GM12878 (cell line): ENCODE measurements at regions of chr18 and their contacts with region 1.

Region 1: GRCh38 chr18:34297287-34297686 is 72.6 kb upstream of the NOL4 start:
- DNase-seq: no peak
- ATAC-seq: peak; percentile 18; the same call in 1 of the 3 replicates
- H3K4me3 ChIP-seq: no peak overlapping the region
- H3K27ac ChIP-seq: no peak overlapping the region
- H3K4me1 ChIP-seq: no peaks in the 10 kb centered on the region
- H3K27me3 ChIP-seq: no peaks in the 10 kb centered on the region
- CTCF ChIP-seq: no peak
- EP300 ChIP-seq: no peak
- POLR2A ChIP-seq: no peak
- RAD21 ChIP-seq: no peak

Region 2: GRCh38 chr18:34314847-34315246 is 17.6 kb after region 1 on chr18:
- CTCF ChIA-PET with region 1: interaction called, 7 read pairs
- POLR2A ChIA-PET with region 1: interaction called, 16 read pairs
- RAD21 ChIA-PET with region 1: interaction called, 35 read pairs
- SMC1A ChIA-PET with region 1: interaction called, 17 read pairs
- in situ Hi-C with region 1: no loop called
- intact Hi-C with region 1: no loop called
- DNase-seq: no peak
- ATAC-seq: no peak
- H3K4me3 ChIP-seq: no peak overlapping the region
- H3K27ac ChIP-seq: no peak overlapping the region
- H3K4me1 ChIP-seq: no peaks in the 10 kb centered on the region
- H3K27me3 ChIP-seq: no peaks in the 10 kb centered on the region
- CTCF ChIP-seq: no peak
- EP300 ChIP-seq: no peak
- POLR2A ChIP-seq: no peak
- RAD21 ChIP-seq: no peak

Region 3: DNA sequence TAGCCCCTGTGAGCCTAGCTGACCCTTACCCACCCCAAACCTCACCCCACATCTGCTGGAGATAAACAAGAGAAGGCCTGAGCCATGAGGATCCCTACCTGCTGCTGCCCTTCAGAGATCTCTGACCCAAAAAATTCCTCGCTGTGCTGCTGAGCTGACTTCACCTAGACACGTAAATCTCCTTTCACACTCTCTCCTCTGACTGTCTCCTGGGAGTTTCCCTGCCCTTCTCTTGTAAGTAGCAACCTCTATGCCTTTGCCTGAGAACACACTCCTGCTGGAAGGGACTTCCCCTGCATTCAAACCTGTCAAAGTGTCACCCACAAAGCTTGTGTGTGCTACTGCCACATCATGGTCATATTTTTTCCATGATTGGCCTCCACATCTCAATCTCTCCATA is 61.6 kb after region 1 on chr18:
- CTCF ChIA-PET with region 1: no interaction called
- POLR2A ChIA-PET with region 1: no interaction called
- RAD21 ChIA-PET with region 1: no interaction called
- SMC1A ChIA-PET with region 1: no interaction called
- in situ Hi-C with region 1: no loop called
- intact Hi-C with region 1: no loop called
- DNase-seq: peak; percentile 72
- ATAC-seq: peak; percentile 88
- H3K4me3 ChIP-seq: no peak overlapping the region
- H3K27ac ChIP-seq: no peak overlapping the region; the same call in 1 of the 2 replicates
- H3K4me1 ChIP-seq: no peaks in the 10 kb centered on the region; the same call in 1 of the 2 replicates
- H3K27me3 ChIP-seq: no peaks in the 10 kb centered on the region
- CTCF ChIP-seq: peak in 1 of 3 experiments; percentile 39; a peak in 2 of 6 replicates
- EP300 ChIP-seq: peak in 1 of 2 experiments; percentile 72; a peak in 2 of 4 replicates
- POLR2A ChIP-seq: no peak
- RAD21 ChIP-seq: peak; percentile 43; the same call in 1 of the 2 replicates